Activated B cell treated with CpG ODN at 0.5 μM for 24 hours (primary cell): ENCODE measurements at regions of chr1 and their contacts with region 1.

Region 1: DNA sequence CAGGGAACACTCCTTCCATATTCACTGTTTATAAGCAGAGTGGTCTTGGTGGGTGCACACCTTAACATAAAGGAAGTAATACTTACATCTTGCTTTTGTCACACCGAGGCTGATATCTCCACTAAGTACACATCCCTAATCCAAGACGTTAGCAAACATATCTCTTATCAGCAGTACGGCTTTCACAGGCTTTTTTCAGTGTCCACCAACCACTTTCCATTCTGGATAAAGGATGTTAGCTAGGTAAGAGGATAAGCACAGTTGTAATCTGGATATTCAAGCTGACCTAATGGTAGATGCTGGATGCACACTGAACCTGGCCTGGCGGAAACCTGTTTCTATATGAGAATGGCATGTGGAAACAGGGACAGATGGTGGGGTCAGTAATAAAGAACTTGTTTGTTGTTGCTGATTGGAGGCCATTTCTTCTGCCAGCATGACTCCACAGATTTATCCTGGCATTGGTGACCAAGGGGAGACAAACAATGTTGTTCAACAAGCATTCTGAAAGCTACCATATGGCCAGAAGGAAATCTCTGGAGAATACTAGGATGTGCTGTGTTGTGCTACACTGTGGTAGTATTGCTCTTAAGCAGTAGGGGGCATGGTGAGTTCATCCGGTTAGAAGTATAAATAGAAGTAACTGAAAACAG is 416.4 kb downstream of the PTBP2 start:
- DNase-seq: no peak
- ATAC-seq: peak; percentile 79
- H3K4me3 Mint-ChIP-seq: peak overlapping the region; percentile 42
- H3K27ac Mint-ChIP-seq: no peak overlapping the region
- H3K4me1 Mint-ChIP-seq: peaks cover 8% of the 10 kb centered on the region
- H3K27me3 Mint-ChIP-seq: no peaks in the 10 kb centered on the region
- CTCF ChIP-seq: no peak

Region 2: GRCh38 chr1:96220639-96221038 is 917.3 kb before region 1 on chr1:
- CTCF ChIA-PET with region 1: no interaction called
- POLR2A ChIA-PET with region 1: no interaction called
- intact Hi-C with region 1: no loop called
- DNase-seq: no peak
- ATAC-seq: no peak
- H3K4me3 Mint-ChIP-seq: no peak overlapping the region
- H3K27ac Mint-ChIP-seq: no peak overlapping the region
- H3K4me1 Mint-ChIP-seq: no peaks in the 10 kb centered on the region
- H3K27me3 Mint-ChIP-seq: no peaks in the 10 kb centered on the region
- CTCF ChIP-seq: no peak

Region 3: GRCh38 chr1:97524211-97524610 is 386.2 kb after region 1 on chr1:
- CTCF ChIA-PET with region 1: interaction called, 5 read pairs
- POLR2A ChIA-PET with region 1: no interaction called
- intact Hi-C with region 1: loop called (anchors 1 kb)
- DNase-seq: no peak
- ATAC-seq: no peak
- H3K4me3 Mint-ChIP-seq: no peak overlapping the region
- H3K27ac Mint-ChIP-seq: no peak overlapping the region
- H3K4me1 Mint-ChIP-seq: no peaks in the 10 kb centered on the region
- H3K27me3 Mint-ChIP-seq: no peaks in the 10 kb centered on the region
- CTCF ChIP-seq: no peak

Region 4: DNA sequence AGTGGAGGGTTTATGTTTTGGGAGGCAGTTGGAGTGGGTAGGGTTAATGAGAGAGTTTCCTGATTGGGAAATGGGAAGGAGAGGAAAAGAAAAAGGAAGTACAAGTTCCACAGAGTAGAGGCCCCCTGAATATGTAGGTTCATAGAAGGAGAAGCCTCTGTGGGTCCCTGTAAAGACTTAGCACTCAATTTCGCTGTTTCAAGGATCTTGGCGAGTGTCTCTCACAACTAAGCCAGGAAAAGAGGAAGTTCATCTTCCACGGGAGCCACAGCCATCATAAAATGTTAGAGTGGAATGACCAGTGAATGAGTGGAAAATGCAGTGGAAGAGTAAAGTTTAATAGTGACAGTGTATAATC is 800.3 kb after region 1 on chr1:
- CTCF ChIA-PET with region 1: no interaction called
- POLR2A ChIA-PET with region 1: no interaction called
- intact Hi-C with region 1: no loop called
- DNase-seq: no peak
- ATAC-seq: no peak
- H3K4me3 Mint-ChIP-seq: no peak overlapping the region
- H3K27ac Mint-ChIP-seq: no peak overlapping the region
- H3K4me1 Mint-ChIP-seq: no peaks in the 10 kb centered on the region
- H3K27me3 Mint-ChIP-seq: no peaks in the 10 kb centered on the region
- CTCF ChIP-seq: no peak